Heart right ventricle (tissue), 16 donors: ENCODE measurements at regions of chr2 and their contacts with region 1.

Region 1: DNA sequence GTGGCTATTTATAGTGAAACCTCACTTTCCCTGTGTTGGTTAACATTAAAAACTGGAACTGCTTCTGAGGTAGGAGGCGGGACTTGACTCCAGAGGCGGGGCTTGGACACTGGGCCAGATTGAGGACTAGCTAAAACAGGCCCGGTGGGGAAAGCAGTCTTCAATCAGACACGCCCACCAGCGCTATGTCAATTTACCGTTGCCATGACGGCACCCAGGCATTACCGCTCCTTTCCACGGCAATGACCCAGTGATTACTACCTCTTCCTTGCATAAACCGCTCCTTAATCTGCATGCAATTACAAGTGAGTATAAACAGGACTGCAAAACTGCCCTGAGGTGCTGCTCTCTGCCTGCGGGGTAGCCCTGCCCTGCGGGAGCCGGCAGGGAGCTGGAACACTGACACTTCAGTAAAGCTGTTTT is 35.3 kb downstream of the LRRFIP1 start:
- DNase-seq: peak; percentile 84 to 86
- ATAC-seq: peak; percentile 73 to 90 (median 87)
- H3K4me3 ChIP-seq: no peak overlapping the region
- H3K27ac ChIP-seq: peak overlapping the region in 8 of 10 donors; percentile 15 to 65 (median 52)
- H3K4me1 ChIP-seq: peaks cover 10 to 46% (median 38%) of the 10 kb centered on the region in 9 donors
- H3K27me3 ChIP-seq: no peaks in the 10 kb centered on the region
- CTCF ChIP-seq: no peak

Region 2: DNA sequence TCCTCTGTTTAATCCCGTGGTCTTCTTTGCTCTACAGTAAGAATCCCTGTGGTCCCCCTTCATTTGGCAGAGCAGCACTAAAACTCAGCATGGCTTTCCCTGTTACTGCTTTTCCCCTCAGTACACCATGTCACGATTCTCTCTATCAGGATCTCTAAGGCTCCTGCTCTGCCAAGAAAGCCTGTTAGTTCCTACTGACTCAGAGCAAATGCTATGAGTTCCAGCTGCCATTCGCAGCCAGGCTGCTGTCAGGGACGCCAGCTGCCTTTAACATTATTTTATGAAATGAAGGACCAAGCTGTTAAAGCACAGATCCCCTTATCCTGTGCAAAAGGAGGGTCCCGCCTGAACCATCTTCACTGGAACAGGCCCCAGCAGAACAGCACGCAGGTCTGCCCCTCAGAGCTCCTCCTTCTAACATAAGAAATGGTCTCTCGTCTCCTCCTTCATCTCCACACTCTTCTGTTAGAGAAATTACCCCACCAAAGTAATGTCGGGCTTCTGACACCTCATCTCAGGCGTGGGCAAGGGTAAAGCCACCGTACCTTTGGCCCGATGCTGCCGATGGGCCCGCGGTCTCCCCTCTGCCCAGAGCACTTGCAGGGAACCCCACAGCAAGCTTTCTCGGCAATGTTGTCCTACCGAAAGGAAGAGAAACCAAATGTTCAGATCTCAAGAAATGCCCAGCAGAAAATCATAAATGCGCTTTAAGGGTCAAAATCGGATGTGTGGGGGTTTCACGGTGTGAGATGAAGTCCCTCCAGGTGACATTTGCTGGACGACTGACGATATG is 301.3 kb before region 1 on chr2:
- intact Hi-C with region 1: no loop called
- DNase-seq: peak in 1 of 2 donors; percentile 23
- ATAC-seq: peak; percentile 47 to 77 (median 59)
- H3K4me3 ChIP-seq: no peak overlapping the region
- H3K27ac ChIP-seq: peak overlapping the region in 8 of 10 donors; percentile 3 to 62 (median 40)
- H3K4me1 ChIP-seq: peaks cover 0 to 23% (median 0%) of the 10 kb centered on the region in 9 donors
- H3K27me3 ChIP-seq: peaks cover 0 to 18% (median 0%) of the 10 kb centered on the region in 7 donors
- CTCF ChIP-seq: no peak

Region 3: GRCh38 chr2:237581751-237582746 is 80.6 kb before region 1 on chr2:
- intact Hi-C with region 1: loop called in 2 of 10 experiments (anchors 5 to 10 kb)
- DNase-seq: peak; percentile 75 to 86
- ATAC-seq: peak; percentile 86 to 95 (median 90)
- H3K4me3 ChIP-seq: peak overlapping the region in 5 of 10 donors; percentile 1 to 44 (median 29)
- H3K27ac ChIP-seq: peak overlapping the region; percentile 72 to 92 (median 82)
- H3K4me1 ChIP-seq: peaks cover 0 to 30% (median 21%) of the 10 kb centered on the region in 9 donors
- H3K27me3 ChIP-seq: no peaks in the 10 kb centered on the region
- CTCF ChIP-seq: peak in 8 of 9 donors; percentile 31 to 85 (median 60)

Region 4: GRCh38 chr2:237590272-237591140 is 72.2 kb before region 1 on chr2 and contains the start of gene RAB17:
- intact Hi-C with region 1: loop called in 4 of 10 experiments (anchors 5 to 10 kb)
- DNase-seq: no peak
- ATAC-seq: peak in 6 of 8 donors; percentile 38 to 74 (median 58)
- H3K4me3 ChIP-seq: peak within 1 kb of the TSS in 1 of 10 donors; percentile 4
- H3K27ac ChIP-seq: peak within 1 kb of the TSS in 4 of 10 donors; percentile 9 to 43 (median 40)
- H3K4me1 ChIP-seq: peaks cover 10 to 47% (median 26%) of the 10 kb centered on the region in 9 donors
- H3K27me3 ChIP-seq: no peaks in the 10 kb centered on the region
- CTCF ChIP-seq: no peak
- total RNA-seq, gene RAB17: 1.9 to 6.9 (median 4.6) TPM

Region 5: GRCh38 chr2:237596520-237596860 is 66.2 kb before region 1 on chr2:
- intact Hi-C with region 1: loop called in 4 of 10 experiments (anchors 5 to 10 kb)
- DNase-seq: no peak
- ATAC-seq: no peak
- H3K4me3 ChIP-seq: no peak overlapping the region
- H3K27ac ChIP-seq: peak overlapping the region in 3 of 10 donors; percentile 25 to 79 (median 73)
- H3K4me1 ChIP-seq: peaks cover 7 to 47% (median 33%) of the 10 kb centered on the region in 9 donors
- H3K27me3 ChIP-seq: no peaks in the 10 kb centered on the region
- CTCF ChIP-seq: no peak

Region 6: DNA sequence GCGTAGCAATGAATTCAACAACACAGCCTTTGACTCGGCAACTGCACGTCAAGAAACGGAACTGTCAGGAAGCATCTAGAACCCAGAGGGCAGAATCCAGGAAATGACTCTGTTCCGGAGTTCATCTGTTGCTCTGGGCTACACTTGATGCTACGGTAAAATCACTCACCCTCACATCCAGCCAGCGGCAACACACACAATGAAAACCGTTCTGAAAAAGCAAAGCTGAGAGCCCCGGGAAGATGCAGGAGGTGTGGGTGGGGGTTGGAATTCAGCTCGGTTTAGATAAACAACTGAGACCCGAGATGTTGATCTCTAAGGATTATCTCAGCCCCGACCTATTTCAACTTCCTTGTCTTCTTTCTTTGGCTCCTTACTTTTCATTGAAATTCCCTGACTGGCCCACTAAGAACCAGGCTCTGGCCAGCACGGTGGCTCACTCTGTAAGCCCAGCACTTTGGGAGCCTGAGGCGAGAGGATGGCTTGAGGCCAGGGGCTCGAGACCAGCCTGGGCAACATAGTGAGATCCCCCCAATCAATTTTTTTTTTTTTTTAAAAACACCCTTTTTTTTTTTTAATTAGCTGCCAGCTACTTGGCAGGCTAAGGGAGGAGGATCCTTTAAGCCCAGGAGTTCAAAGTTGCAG is 58.8 kb before region 1 on chr2:
- intact Hi-C with region 1: loop called in 4 of 10 experiments (anchors 5 to 10 kb)
- DNase-seq: peak in 1 of 2 donors; percentile 64
- ATAC-seq: peak in 7 of 8 donors; percentile 34 to 81 (median 57)
- H3K4me3 ChIP-seq: no peak overlapping the region
- H3K27ac ChIP-seq: peak overlapping the region in 6 of 10 donors; percentile 9 to 62 (median 48)
- H3K4me1 ChIP-seq: peaks cover 6 to 50% (median 37%) of the 10 kb centered on the region in 9 donors
- H3K27me3 ChIP-seq: no peaks in the 10 kb centered on the region
- CTCF ChIP-seq: no peak

Region 7: GRCh38 chr2:237627441-237628246 is 35.0 kb before region 1 on chr2 and contains the start of gene LRRFIP1:
- intact Hi-C with region 1: loop called in 5 of 10 experiments (anchors 5 kb)
- DNase-seq: peak in 1 of 2 donors; percentile 59
- ATAC-seq: peak; percentile 52 to 84 (median 62)
- H3K4me3 ChIP-seq: peak within 1 kb of the TSS; percentile 41 to 90 (median 66)
- H3K27ac ChIP-seq: peak within 1 kb of the TSS; percentile 81 to 95 (median 93)
- H3K4me1 ChIP-seq: peaks cover 9 to 71% (median 57%) of the 10 kb centered on the region in 9 donors
- H3K27me3 ChIP-seq: peaks cover 0 to 14% (median 3%) of the 10 kb centered on the region in 7 donors
- CTCF ChIP-seq: peak in 3 of 9 donors; percentile 22 to 31 (median 27)
- total RNA-seq, gene LRRFIP1: 91.5 to 132 (median 112) TPM